ENCODE measurements at regions of chr10 and their contacts with region 1.

Region 1: GRCh38 chr10:29735596-29736318 is 101.0 kb upstream of the SVIL start:
- DNase-seq: peak; percentile 91
- H3K4me3 ChIP-seq: peak overlapping the region; percentile 72 to 89 (median 79)
- H3K27ac ChIP-seq: peak overlapping the region; percentile 78
- H3K4me1 ChIP-seq: peaks cover 18% of the 10 kb centered on the region
- H3K27me3 ChIP-seq: no peaks in the 10 kb centered on the region
- CTCF ChIP-seq: peak; percentile 46 to 95

Region 2: DNA sequence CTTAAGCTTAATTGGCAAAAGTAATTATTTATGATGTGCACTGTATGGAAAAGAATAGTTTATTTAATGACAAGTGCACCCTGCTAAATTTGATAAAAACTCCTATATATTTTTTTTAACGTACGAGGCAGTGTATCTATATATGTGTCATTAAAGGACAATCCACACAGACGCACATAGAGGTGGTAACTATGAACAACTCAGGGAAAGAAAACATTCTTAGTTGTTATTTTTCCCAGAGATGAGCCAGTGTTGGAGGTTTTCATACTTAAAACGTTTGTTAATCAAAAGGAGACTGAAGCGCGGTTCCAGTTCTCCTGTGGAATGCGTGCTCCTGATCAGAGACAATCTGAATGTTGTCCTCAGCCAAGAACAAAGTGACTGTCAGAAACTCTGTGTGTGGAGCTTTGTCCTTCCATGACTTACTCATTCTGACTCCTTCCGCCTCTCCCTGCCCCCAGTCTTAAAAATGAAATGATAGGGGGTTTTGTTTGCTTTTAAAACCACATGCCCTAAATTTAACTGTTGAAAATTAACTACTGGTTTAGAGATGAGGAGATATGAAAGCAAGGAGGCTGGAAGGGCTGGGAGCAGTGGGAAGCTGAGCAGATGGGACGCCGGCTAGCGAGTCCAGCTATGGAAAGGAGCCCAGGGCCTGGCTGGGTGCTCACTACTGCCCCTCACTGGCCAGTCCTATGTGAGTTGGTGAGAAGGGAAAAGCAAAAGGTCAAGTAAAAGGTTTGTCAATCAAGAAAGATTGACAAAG is 200.6 kb before region 1 on chr10:
- CTCF ChIA-PET with region 1: no interaction called
- dilution Hi-C with region 1: no loop called
- in situ Hi-C with region 1: no loop called
- intact Hi-C with region 1: loop called (anchors 2 kb)
- DNase-seq: peak; percentile 83
- H3K4me3 ChIP-seq: peak overlapping the region in 2 of 3 experiments; percentile 11 to 19
- H3K27ac ChIP-seq: peak overlapping the region; percentile 70
- H3K4me1 ChIP-seq: peaks cover 25% of the 10 kb centered on the region
- H3K27me3 ChIP-seq: no peaks in the 10 kb centered on the region
- CTCF ChIP-seq: peak; percentile 81 to 89

Region 3: GRCh38 chr10:29598851-29599311 is 136.9 kb before region 1 on chr10:
- CTCF ChIA-PET with region 1: no interaction called
- dilution Hi-C with region 1: no loop called
- in situ Hi-C with region 1: loop called in 1 of 2 experiments (anchors 10 kb)
- intact Hi-C with region 1: no loop called
- DNase-seq: peak; percentile 49
- H3K4me3 ChIP-seq: no peak overlapping the region
- H3K27ac ChIP-seq: peak overlapping the region; percentile 19
- H3K4me1 ChIP-seq: peaks cover 23% of the 10 kb centered on the region
- H3K27me3 ChIP-seq: no peaks in the 10 kb centered on the region
- CTCF ChIP-seq: no peak

Region 4: DNA sequence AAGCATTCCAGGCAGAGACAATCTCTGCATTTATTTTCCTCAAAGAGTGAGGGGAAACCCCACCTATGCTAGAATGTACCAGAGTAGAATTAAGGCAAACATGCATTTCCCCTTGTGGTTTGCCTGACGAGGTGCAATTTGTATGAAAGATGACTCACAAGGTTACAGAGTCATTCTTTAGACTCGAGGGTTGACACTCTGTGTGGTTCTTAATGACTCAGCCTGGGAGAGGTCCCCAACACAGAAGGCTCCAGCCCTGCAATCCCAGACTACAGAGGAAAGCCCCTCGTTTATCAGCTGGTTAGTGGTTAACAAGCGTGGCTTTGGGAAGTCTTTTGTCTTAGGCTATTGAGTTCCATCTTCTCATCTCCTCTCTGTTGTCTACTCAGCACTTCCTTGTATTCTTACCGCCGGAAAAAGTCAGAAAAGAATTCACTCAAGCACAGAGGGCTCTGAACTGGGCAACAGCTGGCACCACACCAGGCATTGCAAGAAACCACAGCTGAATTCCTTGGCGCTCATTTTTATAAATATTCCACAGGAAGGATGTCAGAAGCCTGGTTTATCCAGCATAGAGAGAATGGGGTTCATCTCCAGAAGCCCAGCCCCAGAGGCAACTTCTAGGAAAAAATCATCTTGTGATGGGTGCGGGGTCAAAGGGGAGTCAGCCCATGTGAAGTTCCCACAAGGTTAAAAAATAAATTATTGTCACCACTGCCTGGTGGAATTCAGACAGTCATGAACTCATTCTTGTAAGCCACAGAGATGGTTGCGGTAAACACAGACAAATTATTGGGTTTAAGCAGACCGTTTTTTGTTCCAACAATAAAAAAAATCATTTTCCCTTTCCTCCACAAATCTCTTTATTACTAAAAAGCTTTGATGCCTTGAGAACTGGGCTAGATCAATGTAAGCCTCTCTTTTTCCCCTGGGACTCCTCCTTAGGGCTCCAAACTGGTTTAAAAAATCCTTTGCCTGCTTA is 76.5 kb before region 1 on chr10:
- CTCF ChIA-PET with region 1: no interaction called
- dilution Hi-C with region 1: no loop called
- in situ Hi-C with region 1: no loop called
- intact Hi-C with region 1: loop called (anchors 1 kb)
- DNase-seq: peak; percentile 100
- H3K4me3 ChIP-seq: no peak overlapping the region
- H3K27ac ChIP-seq: peak overlapping the region; percentile 82
- H3K4me1 ChIP-seq: peaks cover 25% of the 10 kb centered on the region
- H3K27me3 ChIP-seq: no peaks in the 10 kb centered on the region
- CTCF ChIP-seq: peak; percentile 31 to 64

Region 5: GRCh38 chr10:29841724-29842649 is 106.2 kb after region 1 on chr10:
- CTCF ChIA-PET with region 1: no interaction called
- dilution Hi-C with region 1: no loop called
- in situ Hi-C with region 1: no loop called
- intact Hi-C with region 1: loop called (anchors 5 kb)
- DNase-seq: no peak
- H3K4me3 ChIP-seq: no peak overlapping the region
- H3K27ac ChIP-seq: no peak overlapping the region
- H3K4me1 ChIP-seq: peaks cover 21% of the 10 kb centered on the region
- H3K27me3 ChIP-seq: no peaks in the 10 kb centered on the region
- CTCF ChIP-seq: no peak

Region 6: GRCh38 chr10:29926693-29927048 is 190.9 kb after region 1 on chr10:
- CTCF ChIA-PET with region 1: no interaction called
- dilution Hi-C with region 1: no loop called
- in situ Hi-C with region 1: no loop called
- intact Hi-C with region 1: loop called (anchors 5 kb)
- DNase-seq: peak; percentile 54
- H3K4me3 ChIP-seq: no peak overlapping the region
- H3K27ac ChIP-seq: no peak overlapping the region
- H3K4me1 ChIP-seq: peaks cover 19% of the 10 kb centered on the region
- H3K27me3 ChIP-seq: no peaks in the 10 kb centered on the region
- CTCF ChIP-seq: peak; percentile 87 to 91

Measured in mammary epithelial cell (primary cell).